ENCODE measurements at regions of chr1 and their contacts with region 1.

Region 1: DNA sequence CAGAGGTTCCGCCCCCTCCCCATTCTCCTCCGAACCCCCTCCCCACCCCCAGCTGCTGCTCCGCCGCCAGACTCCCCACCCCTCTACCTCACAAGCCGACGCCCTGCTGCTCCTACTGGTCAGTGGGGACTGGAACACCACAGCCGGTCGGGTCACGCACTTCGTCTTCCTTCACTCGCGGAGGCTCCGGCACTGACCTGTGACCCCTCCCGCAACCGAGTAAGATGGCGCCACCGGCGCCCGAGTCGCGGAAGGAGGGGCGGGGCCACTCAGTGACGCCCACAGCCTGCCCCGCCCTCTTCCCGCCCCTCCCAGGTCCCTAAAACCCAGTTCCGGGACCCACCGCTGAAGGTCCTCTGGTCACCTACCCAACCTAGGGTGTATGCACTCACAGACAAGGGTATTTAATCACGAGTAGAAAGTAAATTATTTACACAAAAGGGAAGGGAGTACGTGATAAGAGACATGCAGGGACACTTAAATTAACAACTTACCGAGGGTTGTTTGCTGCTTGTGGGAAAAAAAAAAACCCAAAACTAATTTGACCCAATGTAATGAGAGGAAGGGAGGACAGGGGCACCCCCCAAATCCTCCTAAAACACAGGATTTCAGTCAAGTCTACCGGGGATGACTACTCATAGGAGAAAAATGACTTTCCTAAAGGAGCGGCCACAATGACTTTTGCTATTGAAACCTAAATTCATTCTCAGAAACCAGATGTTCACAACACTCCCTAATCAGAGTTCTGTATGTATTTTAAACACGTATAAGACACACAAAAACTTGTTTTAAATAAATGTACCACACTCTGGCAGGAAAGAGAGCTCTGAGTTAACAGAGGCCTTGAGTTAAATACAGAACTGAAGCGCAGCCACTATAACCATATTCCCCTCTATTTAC is at the start of gene RIT1:
- DNase-seq: peak; percentile 87 to 94
- ATAC-seq: peak; percentile 97 to 98 (median 98)
- H3K4me3 ChIP-seq: peak within 1 kb of the TSS; percentile 74
- H3K27ac ChIP-seq: peak within 1 kb of the TSS; percentile 81
- H3K4me1 ChIP-seq: peaks cover 12% of the 10 kb centered on the region
- H3K27me3 ChIP-seq: no peaks in the 10 kb centered on the region
- CTCF ChIP-seq: no peak
- total RNA-seq, gene RIT1: 11.1 to 16.9 (median 12.8) TPM

Region 2: GRCh38 chr1:155513300-155513916 is 398.0 kb before region 1 on chr1:
- intact Hi-C with region 1: no loop called
- DNase-seq: no peak
- ATAC-seq: peak in 3 of 4 donors; percentile 40 to 72 (median 55)
- H3K4me3 ChIP-seq: no peak overlapping the region
- H3K27ac ChIP-seq: peak overlapping the region; percentile 1
- H3K4me1 ChIP-seq: peaks cover 33% of the 10 kb centered on the region
- H3K27me3 ChIP-seq: no peaks in the 10 kb centered on the region
- CTCF ChIP-seq: no peak

Region 3: GRCh38 chr1:155859234-155859829 is 52.1 kb before region 1 on chr1 and contains the start of gene SYT11:
- intact Hi-C with region 1: loop called in 1 of 2 experiments (anchors 5 kb)
- DNase-seq: peak; percentile 94 to 96
- ATAC-seq: peak; percentile 91 to 95 (median 94)
- H3K4me3 ChIP-seq: peak within 1 kb of the TSS; percentile 77
- H3K27ac ChIP-seq: peak within 1 kb of the TSS; percentile 89
- H3K4me1 ChIP-seq: peaks cover 17% of the 10 kb centered on the region
- H3K27me3 ChIP-seq: no peaks in the 10 kb centered on the region
- CTCF ChIP-seq: peak; percentile 8
- total RNA-seq, gene SYT11: 1.5 to 5.0 (median 3.0) TPM

Region 4: GRCh38 chr1:156551866-156552265 is 640.5 kb after region 1 on chr1:
- intact Hi-C with region 1: no loop called
- DNase-seq: no peak
- ATAC-seq: no peak
- H3K4me3 ChIP-seq: no peak overlapping the region
- H3K27ac ChIP-seq: no peak overlapping the region
- H3K4me1 ChIP-seq: peaks cover 10% of the 10 kb centered on the region
- H3K27me3 ChIP-seq: no peaks in the 10 kb centered on the region
- CTCF ChIP-seq: no peak